ENCODE measurements at regions of chr10 and their contacts with region 1.

Region 1: DNA sequence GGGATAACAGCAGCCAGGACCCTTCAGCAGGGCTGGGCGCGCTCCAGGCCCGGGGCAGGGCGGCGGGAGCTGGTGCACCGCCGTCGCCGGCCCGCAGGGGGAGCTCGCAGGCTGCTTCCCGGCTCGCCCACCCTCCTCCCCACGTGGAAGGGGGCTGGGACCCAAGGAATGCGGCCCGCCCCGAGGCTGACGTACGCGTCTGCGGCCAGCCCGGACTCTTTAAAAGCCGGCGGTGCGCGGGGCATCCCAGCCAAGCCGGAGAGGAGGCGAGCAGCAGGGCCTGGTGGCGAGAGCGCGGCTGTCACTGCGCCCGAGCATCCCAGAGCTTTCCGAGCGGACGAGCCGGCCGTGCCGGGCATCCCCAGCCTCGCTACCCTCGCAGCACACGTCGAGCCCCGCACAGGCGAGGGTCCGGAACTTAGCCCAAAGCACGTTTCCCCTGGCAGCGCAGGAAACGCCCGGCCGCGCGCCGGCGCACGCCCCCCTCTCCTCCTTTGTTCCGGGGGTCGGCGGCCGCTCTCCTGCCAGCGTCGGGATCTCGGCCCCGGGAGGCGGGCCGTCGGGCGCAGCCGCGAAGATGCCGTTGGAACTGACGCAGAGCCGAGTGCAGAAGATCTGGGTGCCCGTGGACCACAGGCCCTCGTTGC is at the start of gene PFKFB3:
- DNase-seq: peak; percentile 66 to 99 (median 77)
- ATAC-seq: peak; percentile 81
- H3K4me3 ChIP-seq: peak within 1 kb of the TSS; percentile 84
- H3K4me3 Mint-ChIP-seq: peak within 1 kb of the TSS; percentile 92 to 100 (median 97)
- H3K27ac ChIP-seq: peak within 1 kb of the TSS; percentile 70
- H3K27ac Mint-ChIP-seq: peak within 1 kb of the TSS; percentile 81 to 97 (median 93)
- H3K4me1 ChIP-seq: peaks cover 0 to 12% of the 10 kb centered on the region in 2 donors
- H3K4me1 Mint-ChIP-seq: peaks cover 14 to 44% (median 35%) of the 10 kb centered on the region in 7 donors
- H3K27me3 ChIP-seq: no peaks in the 10 kb centered on the region
- H3K27me3 Mint-ChIP-seq: no peaks in the 10 kb centered on the region
- total RNA-seq, gene PFKFB3: 65.9 to 129 (median 80.5) TPM

Region 2: GRCh38 chr10:5889624-5890451 is 313.0 kb before region 1 on chr10 and contains the starts of genes ANKRD16 and FBH1:
- CTCF ChIA-PET with region 1: no interaction called
- POLR2A ChIA-PET with region 1: no interaction called
- intact Hi-C with region 1: loop called in 1 of 2 experiments (anchors 5 kb)
- DNase-seq: peak; percentile 94 to 100 (median 96)
- ATAC-seq: peak; percentile 96
- H3K4me3 ChIP-seq: peak within 1 kb of the TSS; percentile 70
- H3K4me3 Mint-ChIP-seq: peak within 1 kb of the TSS; percentile 90 to 97 (median 94)
- H3K27ac ChIP-seq: peak within 1 kb of the TSS; percentile 81
- H3K27ac Mint-ChIP-seq: peak within 1 kb of the TSS; percentile 80 to 94 (median 87)
- H3K4me1 ChIP-seq: peaks cover 12% of the 10 kb centered on the region in 2 donors
- H3K4me1 Mint-ChIP-seq: peaks cover 34 to 64% (median 60%) of the 10 kb centered on the region in 7 donors
- H3K27me3 ChIP-seq: no peaks in the 10 kb centered on the region
- H3K27me3 Mint-ChIP-seq: no peaks in the 10 kb centered on the region
- total RNA-seq, gene ANKRD16: 4.6 to 9.8 (median 7.2) TPM
- total RNA-seq, gene FBH1: 64.8 to 105 (median 78.6) TPM

Region 3: GRCh38 chr10:6088721-6089390 is 114.0 kb before region 1 on chr10 and contains the start of gene RBM17:
- CTCF ChIA-PET with region 1: no interaction called
- POLR2A ChIA-PET with region 1: interaction called, 3 read pairs
- intact Hi-C with region 1: loop called (anchors 1 kb)
- DNase-seq: peak; percentile 94 to 100 (median 99)
- ATAC-seq: peak; percentile 95
- H3K4me3 ChIP-seq: peak within 1 kb of the TSS; percentile 85
- H3K4me3 Mint-ChIP-seq: peak within 1 kb of the TSS; percentile 84 to 100 (median 94)
- H3K27ac ChIP-seq: peak within 1 kb of the TSS; percentile 84
- H3K27ac Mint-ChIP-seq: peak within 1 kb of the TSS; percentile 77 to 91 (median 87)
- H3K4me1 ChIP-seq: peaks cover 26 to 49% of the 10 kb centered on the region in 2 donors
- H3K4me1 Mint-ChIP-seq: peaks cover 46 to 77% (median 67%) of the 10 kb centered on the region in 7 donors
- H3K27me3 ChIP-seq: no peaks in the 10 kb centered on the region
- H3K27me3 Mint-ChIP-seq: no peaks in the 10 kb centered on the region
- total RNA-seq, gene RBM17: 120 to 158 (median 127) TPM

Region 4: GRCh38 chr10:6151087-6151977 is 51.5 kb before region 1 on chr10:
- CTCF ChIA-PET with region 1: interaction called, 5 read pairs
- POLR2A ChIA-PET with region 1: interaction called, 3 read pairs
- intact Hi-C with region 1: loop called in 1 of 2 experiments (anchors 1 kb)
- DNase-seq: peak; percentile 26 to 58 (median 53)
- ATAC-seq: peak; percentile 79
- H3K4me3 ChIP-seq: peak overlapping the region; percentile 28
- H3K4me3 Mint-ChIP-seq: peak overlapping the region; percentile 70 to 85 (median 80)
- H3K27ac ChIP-seq: peak overlapping the region; percentile 25
- H3K27ac Mint-ChIP-seq: peak overlapping the region; percentile 68 to 92 (median 85)
- H3K4me1 ChIP-seq: peaks cover 1 to 32% of the 10 kb centered on the region in 2 donors
- H3K4me1 Mint-ChIP-seq: peaks cover 49 to 68% (median 59%) of the 10 kb centered on the region in 7 donors
- H3K27me3 ChIP-seq: no peaks in the 10 kb centered on the region
- H3K27me3 Mint-ChIP-seq: no peaks in the 10 kb centered on the region

Region 5: GRCh38 chr10:6269953-6270867 is 67.4 kb after region 1 on chr10:
- CTCF ChIA-PET with region 1: no interaction called
- POLR2A ChIA-PET with region 1: no interaction called
- intact Hi-C with region 1: loop called (anchors 2 to 5 kb)
- DNase-seq: peak in 8 of 9 donors; percentile 33 to 69 (median 52)
- ATAC-seq: peak; percentile 73
- H3K4me3 ChIP-seq: no peak overlapping the region
- H3K4me3 Mint-ChIP-seq: peak overlapping the region in 5 of 10 donors; percentile 8 to 72 (median 31)
- H3K27ac ChIP-seq: no peak overlapping the region
- H3K27ac Mint-ChIP-seq: peak overlapping the region; percentile 38 to 94 (median 85)
- H3K4me1 ChIP-seq: peaks cover 7 to 30% of the 10 kb centered on the region in 2 donors
- H3K4me1 Mint-ChIP-seq: peaks cover 23 to 63% (median 28%) of the 10 kb centered on the region in 7 donors
- H3K27me3 ChIP-seq: no peaks in the 10 kb centered on the region
- H3K27me3 Mint-ChIP-seq: no peaks in the 10 kb centered on the region

Region 6: DNA sequence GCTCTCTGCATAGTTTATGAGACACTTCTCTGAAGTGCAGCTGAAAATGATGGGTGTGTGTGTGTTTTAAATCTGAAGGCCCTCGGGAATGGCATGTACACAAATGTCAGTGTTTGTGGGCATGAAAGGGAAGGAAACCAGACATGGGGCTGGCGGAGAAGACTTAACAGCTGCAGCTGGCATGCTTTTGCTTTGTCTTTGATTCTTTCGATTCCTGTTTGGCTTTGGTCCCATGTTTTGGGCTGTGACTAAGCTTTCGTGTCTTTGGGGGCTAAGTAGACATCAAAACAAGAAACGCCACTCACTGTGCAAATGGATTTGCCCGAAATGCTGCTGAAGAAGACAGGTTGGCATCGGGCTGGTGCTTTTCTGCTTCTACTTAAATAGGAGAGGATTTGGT is 179.3 kb after region 1 on chr10:
- CTCF ChIA-PET with region 1: interaction called, 5 read pairs
- POLR2A ChIA-PET with region 1: interaction called, 10 read pairs
- intact Hi-C with region 1: no loop called
- DNase-seq: peak in 7 of 9 donors; percentile 40 to 63 (median 53)
- ATAC-seq: peak; percentile 53
- H3K4me3 ChIP-seq: peak overlapping the region; percentile 30
- H3K4me3 Mint-ChIP-seq: peak overlapping the region; percentile 52 to 84 (median 72)
- H3K27ac ChIP-seq: no peak overlapping the region
- H3K27ac Mint-ChIP-seq: peak overlapping the region; percentile 9 to 86 (median 76)
- H3K4me1 ChIP-seq: peaks cover 0 to 17% of the 10 kb centered on the region in 2 donors
- H3K4me1 Mint-ChIP-seq: peaks cover 11 to 27% (median 20%) of the 10 kb centered on the region in 7 donors
- H3K27me3 ChIP-seq: no peaks in the 10 kb centered on the region
- H3K27me3 Mint-ChIP-seq: no peaks in the 10 kb centered on the region

Region 7: DNA sequence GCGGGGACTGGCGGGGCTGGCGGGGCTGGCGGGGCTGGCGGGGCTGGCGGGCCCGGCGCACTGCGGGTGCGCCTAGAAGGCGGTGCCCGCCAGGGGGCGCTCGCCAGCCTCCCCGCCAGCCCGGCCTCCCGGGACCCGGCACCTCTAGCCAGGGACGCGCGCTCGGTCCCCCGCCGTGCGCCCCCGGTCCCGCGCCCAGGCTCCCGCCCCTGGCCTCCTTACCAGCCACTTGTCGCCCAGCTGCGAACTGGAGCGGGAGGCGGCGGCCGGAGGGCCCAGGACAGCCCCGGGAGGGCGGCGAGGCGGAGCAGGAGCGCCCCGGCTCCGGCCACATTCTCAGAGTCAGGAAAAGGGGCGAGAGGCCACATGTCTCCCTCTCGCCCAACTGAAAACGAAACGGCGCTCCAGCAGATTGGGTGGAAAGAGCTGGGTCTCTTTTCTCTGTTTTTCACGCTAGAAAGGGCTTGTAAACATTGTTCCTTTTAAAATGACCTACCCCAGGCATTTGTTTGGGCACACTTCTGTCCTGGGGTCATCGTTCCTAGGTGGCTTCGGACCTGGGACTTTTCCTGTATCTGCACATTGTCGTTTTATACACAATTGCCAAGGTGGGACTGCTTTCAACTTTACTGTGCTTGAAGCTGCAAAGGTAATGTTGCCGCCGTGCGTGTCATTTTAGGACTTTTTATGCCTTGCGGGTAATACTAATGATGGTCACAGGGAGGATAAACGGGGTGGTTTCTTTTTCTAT is 377.6 kb after region 1 on chr10:
- CTCF ChIA-PET with region 1: no interaction called
- POLR2A ChIA-PET with region 1: no interaction called
- intact Hi-C with region 1: loop called (anchors 5 kb)
- DNase-seq: peak; percentile 74 to 95 (median 84)
- ATAC-seq: peak; percentile 92
- H3K4me3 ChIP-seq: peak overlapping the region; percentile 88
- H3K4me3 Mint-ChIP-seq: peak overlapping the region; percentile 86 to 99 (median 93)
- H3K27ac ChIP-seq: peak overlapping the region; percentile 94
- H3K27ac Mint-ChIP-seq: peak overlapping the region; percentile 94 to 99 (median 98)
- H3K4me1 ChIP-seq: peaks cover 33 to 42% of the 10 kb centered on the region in 2 donors
- H3K4me1 Mint-ChIP-seq: peaks cover 35 to 67% (median 56%) of the 10 kb centered on the region in 7 donors
- H3K27me3 ChIP-seq: no peaks in the 10 kb centered on the region
- H3K27me3 Mint-ChIP-seq: no peaks in the 10 kb centered on the region

Region 8: DNA sequence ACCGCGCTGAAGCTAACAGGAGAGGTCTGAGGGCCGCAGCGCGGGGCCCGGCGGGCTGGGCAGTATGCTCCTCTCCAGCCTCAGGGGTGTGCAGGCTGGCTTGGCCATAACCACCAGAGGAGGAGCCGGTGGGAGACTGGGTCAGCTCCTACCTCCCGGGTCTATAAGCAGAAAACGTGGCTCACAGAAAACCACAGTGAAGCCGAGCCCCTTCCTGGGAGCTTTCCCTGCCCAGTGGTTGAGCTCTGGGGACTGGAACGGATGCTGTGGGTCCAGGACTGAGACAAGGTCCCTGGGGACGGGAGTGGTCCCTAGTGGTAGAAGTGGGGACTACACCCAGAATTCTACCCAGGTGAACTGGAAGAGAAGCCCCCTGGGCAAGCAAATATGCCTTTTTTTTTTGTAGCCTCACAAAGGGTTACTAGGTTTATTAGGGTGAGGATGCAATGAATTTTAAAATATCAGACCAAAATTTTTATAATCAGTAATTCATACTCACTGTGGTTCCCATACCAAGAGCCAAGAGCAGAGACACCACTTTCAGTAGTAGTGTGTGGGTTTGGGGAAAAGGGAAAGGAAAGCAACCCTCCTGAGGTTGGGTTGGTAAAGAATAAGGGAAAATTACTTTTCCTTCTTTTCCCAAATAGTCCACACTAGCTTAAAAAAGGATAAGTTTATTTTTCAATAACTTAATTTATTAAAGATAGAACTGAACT is 445.2 kb after region 1 on chr10:
- CTCF ChIA-PET with region 1: no interaction called
- POLR2A ChIA-PET with region 1: no interaction called
- intact Hi-C with region 1: no loop called
- DNase-seq: peak; percentile 37 to 75 (median 64)
- ATAC-seq: peak; percentile 94
- H3K4me3 ChIP-seq: no peak overlapping the region
- H3K4me3 Mint-ChIP-seq: peak overlapping the region in 1 of 10 donors; percentile 32
- H3K27ac ChIP-seq: no peak overlapping the region
- H3K27ac Mint-ChIP-seq: peak overlapping the region in 3 of 9 donors; percentile 19 to 67 (median 38)
- H3K4me1 ChIP-seq: peaks cover 5 to 10% of the 10 kb centered on the region in 2 donors
- H3K4me1 Mint-ChIP-seq: peaks cover 0 to 46% (median 27%) of the 10 kb centered on the region in 7 donors
- H3K27me3 ChIP-seq: no peaks in the 10 kb centered on the region
- H3K27me3 Mint-ChIP-seq: no peaks in the 10 kb centered on the region